Prostate gland (tissue), 2 donors: ENCODE measurements at regions of chr19 and their contacts with region 1.

Region 1: DNA sequence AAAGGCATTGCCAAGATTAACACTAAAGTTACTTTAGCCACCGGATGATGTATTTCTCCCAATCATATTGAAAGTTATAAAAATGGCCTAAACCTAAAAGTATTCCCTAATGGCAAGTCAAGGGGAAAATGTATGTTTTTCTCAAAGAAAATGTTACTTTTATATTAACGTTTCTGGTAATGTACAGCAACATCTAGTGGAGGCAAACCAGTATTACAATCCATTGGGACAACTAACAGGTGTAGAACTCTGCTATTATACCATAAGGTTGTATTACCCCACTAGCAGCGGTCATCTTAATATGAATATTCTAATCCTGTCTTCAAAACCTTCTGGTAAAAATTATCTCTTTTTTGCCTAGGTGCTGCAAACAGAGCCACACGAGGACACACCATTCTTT is 69.2 kb downstream of the ZNF100 start:
- DNase-seq: no peak
- H3K4me3 ChIP-seq: no peak overlapping the region
- H3K27ac ChIP-seq: no peak overlapping the region
- H3K4me1 ChIP-seq: no peaks in the 10 kb centered on the region
- H3K27me3 ChIP-seq: no peaks in the 10 kb centered on the region
- CTCF ChIP-seq: peak; percentile 17 to 70 (median 52)
- POLR2A ChIP-seq: no peak

Region 2: DNA sequence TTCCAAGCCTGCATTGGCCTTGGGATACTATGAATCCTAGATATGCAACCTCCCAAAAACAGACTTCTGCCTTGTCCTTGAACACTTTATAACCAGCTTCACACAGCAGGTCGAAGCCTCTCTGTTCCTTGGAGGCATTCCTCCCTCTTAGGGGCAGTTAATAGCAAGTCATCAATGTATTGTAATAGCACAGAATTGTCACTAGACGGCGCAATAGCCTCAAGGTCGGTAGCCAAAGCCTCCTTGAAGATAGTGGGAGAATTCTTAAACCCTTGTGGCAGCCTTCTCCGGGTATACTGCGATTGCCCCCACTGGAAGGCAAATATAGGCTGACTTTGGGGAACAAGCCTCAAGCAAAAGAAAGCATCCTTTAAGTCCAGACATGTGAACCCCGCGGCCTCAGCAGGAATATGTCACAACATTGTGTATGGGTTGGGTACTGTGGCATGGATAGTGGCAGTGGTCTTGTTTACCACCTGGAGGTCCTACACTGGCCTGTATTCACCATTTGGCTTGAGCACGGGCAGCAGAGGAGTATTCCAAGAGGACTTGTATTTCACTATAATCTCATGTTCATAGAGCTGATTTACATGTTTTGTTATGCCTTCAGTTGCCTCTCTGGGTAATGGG is 495.2 kb before region 1 on chr19:
- intact Hi-C with region 1: loop called (anchors 5 kb)
- DNase-seq: peak; percentile 17
- H3K4me3 ChIP-seq: no peak overlapping the region
- H3K27ac ChIP-seq: no peak overlapping the region
- H3K4me1 ChIP-seq: no peaks in the 10 kb centered on the region
- H3K27me3 ChIP-seq: no peaks in the 10 kb centered on the region
- CTCF ChIP-seq: peak; percentile 20 to 57 (median 56)
- POLR2A ChIP-seq: no peak

Region 3: DNA sequence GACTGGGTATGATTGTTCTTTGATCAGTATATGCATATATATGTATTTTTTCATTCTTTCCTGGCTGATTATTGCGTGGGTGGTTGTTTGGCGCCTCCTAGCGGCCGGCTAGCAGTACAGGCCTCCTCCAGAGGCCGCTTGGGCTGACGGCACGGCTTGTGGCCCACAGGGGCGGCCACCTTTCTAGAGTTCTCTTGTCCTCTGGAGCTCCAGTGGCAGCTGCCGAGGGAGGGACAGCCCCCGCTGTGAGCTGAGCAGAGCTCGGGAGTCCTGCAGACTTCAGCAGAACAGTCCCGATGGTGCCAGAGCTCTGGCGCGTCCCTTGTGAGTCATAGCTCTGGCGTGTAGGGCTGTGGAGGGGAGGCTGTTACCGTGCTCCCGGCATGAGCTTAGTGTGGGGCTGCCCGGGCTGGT is 215.3 kb before region 1 on chr19:
- intact Hi-C with region 1: loop called (anchors 5 kb)
- DNase-seq: no peak
- H3K4me3 ChIP-seq: no peak overlapping the region
- H3K27ac ChIP-seq: no peak overlapping the region
- H3K4me1 ChIP-seq: no peaks in the 10 kb centered on the region
- H3K27me3 ChIP-seq: no peaks in the 10 kb centered on the region
- CTCF ChIP-seq: peak; percentile 39 to 68 (median 62)
- POLR2A ChIP-seq: no peak

Region 4: GRCh38 chr19:21749090-21749489 is 50.9 kb after region 1 on chr19:
- intact Hi-C with region 1: no loop called
- DNase-seq: no peak
- H3K4me3 ChIP-seq: no peak overlapping the region
- H3K27ac ChIP-seq: no peak overlapping the region
- H3K4me1 ChIP-seq: no peaks in the 10 kb centered on the region
- H3K27me3 ChIP-seq: no peaks in the 10 kb centered on the region
- CTCF ChIP-seq: no peak
- POLR2A ChIP-seq: no peak